PC-9 (cell line): ENCODE measurements at regions of chr20 and their contacts with region 1.

Region 1: DNA sequence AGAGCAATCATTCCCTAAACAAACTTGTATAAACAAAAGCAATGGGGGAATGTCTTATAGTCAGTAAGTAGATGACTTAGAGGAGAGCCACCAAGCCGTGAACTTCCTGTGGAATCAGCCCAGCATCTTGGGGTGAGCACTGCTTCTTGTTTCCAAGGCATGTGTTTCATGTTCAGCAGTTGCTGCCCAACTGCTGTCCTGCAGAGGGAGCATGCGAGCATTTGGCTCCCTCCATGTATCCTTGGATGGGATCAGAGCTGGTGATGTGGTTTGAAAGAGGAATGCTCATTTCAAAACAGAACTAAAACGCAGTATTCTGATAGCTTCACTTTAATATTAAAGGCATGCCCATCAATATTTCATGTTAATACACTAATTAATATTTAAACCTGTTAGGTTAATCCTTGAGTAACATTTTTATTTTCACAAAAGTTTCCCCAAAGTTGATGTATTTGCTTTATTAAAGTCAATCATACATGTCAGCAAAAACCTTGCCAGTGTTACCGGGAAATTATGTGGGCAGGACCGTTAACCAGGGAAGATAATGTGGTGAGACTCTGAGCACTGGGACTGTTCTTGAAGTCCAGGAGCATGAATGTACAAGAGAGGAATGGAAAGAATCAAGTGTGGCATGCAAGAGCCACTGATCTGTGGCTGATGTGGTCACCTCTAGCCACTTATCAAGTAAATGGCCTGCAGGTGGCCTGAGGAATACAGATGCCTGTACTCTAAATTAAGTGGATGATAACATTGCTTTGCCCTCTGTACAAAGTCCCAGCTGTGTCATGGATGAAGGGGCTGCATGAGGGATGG is 172.2 kb upstream of the GGTLC1 start:
- DNase-seq: peak in 1 of 2 experiments; percentile 36
- H3K4me3 ChIP-seq: no peak overlapping the region
- H3K27ac ChIP-seq: no peak overlapping the region
- H3K4me1 ChIP-seq: peaks cover 15% of the 10 kb centered on the region
- H3K27me3 ChIP-seq: no peaks in the 10 kb centered on the region
- CTCF ChIP-seq: peak; percentile 74

Region 2: DNA sequence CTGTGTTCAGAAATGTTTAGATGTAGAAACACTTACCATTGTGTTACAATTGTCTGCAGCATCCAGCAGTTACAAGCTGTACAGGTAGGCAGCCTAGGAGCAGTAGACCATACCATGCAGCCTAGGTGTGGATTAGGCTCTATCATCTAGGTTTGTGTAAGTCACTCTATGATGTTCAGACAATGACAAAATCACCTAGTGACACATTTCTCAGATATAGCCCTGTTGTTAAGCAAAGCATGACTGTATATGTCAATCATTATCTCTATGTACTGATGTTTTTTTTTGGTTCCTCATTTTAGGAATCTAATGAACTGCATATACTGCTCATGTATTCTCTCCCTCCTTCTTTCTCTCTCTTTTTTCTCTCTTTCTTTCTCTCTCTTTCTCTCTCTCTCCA is 647.6 kb before region 1 on chr20:
- CTCF ChIA-PET with region 1: no interaction called
- POLR2A ChIA-PET with region 1: no interaction called
- intact Hi-C with region 1: no loop called
- DNase-seq: no peak
- H3K4me3 ChIP-seq: no peak overlapping the region
- H3K27ac ChIP-seq: no peak overlapping the region
- H3K4me1 ChIP-seq: no peaks in the 10 kb centered on the region
- H3K27me3 ChIP-seq: no peaks in the 10 kb centered on the region
- CTCF ChIP-seq: no peak

Region 3: GRCh38 chr20:24034820-24035219 is 125.9 kb before region 1 on chr20:
- CTCF ChIA-PET with region 1: no interaction called
- POLR2A ChIA-PET with region 1: no interaction called
- intact Hi-C with region 1: loop called (anchors 10 kb)
- DNase-seq: peak; percentile 89 to 98
- H3K4me3 ChIP-seq: no peak overlapping the region
- H3K27ac ChIP-seq: peak overlapping the region; percentile 52
- H3K4me1 ChIP-seq: peaks cover 41% of the 10 kb centered on the region
- H3K27me3 ChIP-seq: no peaks in the 10 kb centered on the region
- CTCF ChIP-seq: no peak

Region 4: DNA sequence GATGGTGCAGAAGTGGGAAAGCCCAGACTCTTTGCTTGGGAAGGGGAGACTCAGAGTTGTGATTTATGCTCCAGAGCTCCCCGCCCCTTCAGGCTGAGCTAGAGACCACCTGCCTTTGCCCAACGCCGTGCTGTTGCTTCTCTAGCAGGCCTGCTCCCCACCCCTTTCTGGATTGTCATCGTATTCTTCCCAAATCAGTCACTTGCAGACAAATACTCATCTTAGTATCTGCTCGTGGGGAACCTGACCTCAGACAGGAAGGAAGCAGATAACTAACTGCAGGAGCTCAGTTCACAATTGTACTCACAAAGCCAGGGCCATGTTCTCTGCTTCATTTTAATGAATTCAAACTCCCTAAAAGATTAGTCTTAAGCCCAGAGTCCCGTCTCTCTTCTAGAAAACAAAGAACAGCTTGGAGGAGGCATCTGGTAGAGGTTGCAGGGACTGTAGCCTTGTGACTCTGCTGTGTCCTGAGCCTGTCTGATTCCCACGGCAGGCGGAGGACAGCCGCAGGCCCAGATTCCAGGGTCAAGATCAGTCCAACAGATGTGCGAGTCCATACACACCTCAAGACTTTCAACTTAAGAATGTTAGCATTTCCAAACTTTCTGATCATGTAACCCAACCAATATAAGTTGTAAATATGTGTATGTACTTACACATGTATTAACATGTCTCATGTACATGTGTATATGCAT is 115.0 kb before region 1 on chr20:
- CTCF ChIA-PET with region 1: no interaction called
- POLR2A ChIA-PET with region 1: no interaction called
- intact Hi-C with region 1: no loop called
- DNase-seq: no peak
- H3K4me3 ChIP-seq: no peak overlapping the region
- H3K27ac ChIP-seq: no peak overlapping the region
- H3K4me1 ChIP-seq: peaks cover 5% of the 10 kb centered on the region
- H3K27me3 ChIP-seq: no peaks in the 10 kb centered on the region
- CTCF ChIP-seq: no peak

Region 5: GRCh38 chr20:24185791-24186190 is 25.0 kb after region 1 on chr20:
- CTCF ChIA-PET with region 1: no interaction called
- POLR2A ChIA-PET with region 1: interaction called, 10 read pairs
- intact Hi-C with region 1: no loop called
- DNase-seq: no peak
- H3K4me3 ChIP-seq: no peak overlapping the region
- H3K27ac ChIP-seq: no peak overlapping the region
- H3K4me1 ChIP-seq: no peaks in the 10 kb centered on the region
- H3K27me3 ChIP-seq: no peaks in the 10 kb centered on the region
- CTCF ChIP-seq: no peak